T-cell (primary cell): ENCODE measurements at regions of chr6 and their contacts with region 1.

Region 1: DNA sequence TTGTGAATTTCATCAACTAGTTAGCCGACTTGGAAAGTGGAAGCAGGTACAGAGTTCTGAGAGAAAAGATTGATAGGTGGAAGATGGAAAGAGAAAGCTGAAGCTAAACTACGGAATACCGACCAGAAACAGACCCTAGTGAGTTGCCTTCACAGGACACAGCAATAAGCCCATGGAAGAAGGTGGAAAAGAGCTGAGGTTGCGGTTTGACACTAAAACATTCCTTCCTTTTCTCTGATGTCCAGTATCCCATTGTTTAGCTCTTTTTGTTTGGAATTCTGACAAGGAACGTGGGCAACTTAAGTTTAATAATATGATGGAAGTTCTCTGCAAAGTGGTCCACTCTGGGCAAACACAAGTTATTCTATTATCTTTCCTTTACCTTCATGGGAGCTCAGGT is 110.1 kb upstream of the ADTRP start:
- DNase-seq: no peak
- ATAC-seq: no peak
- H3K4me3 ChIP-seq: no peak overlapping the region
- H3K4me3 Mint-ChIP-seq: no peak overlapping the region
- H3K27ac ChIP-seq: no peak overlapping the region
- H3K27ac Mint-ChIP-seq: no peak overlapping the region
- H3K4me1 ChIP-seq: no peaks in the 10 kb centered on the region
- H3K4me1 Mint-ChIP-seq: no peaks in the 10 kb centered on the region
- H3K27me3 ChIP-seq: no peaks in the 10 kb centered on the region
- H3K27me3 Mint-ChIP-seq: no peaks in the 10 kb centered on the region

Region 2: DNA sequence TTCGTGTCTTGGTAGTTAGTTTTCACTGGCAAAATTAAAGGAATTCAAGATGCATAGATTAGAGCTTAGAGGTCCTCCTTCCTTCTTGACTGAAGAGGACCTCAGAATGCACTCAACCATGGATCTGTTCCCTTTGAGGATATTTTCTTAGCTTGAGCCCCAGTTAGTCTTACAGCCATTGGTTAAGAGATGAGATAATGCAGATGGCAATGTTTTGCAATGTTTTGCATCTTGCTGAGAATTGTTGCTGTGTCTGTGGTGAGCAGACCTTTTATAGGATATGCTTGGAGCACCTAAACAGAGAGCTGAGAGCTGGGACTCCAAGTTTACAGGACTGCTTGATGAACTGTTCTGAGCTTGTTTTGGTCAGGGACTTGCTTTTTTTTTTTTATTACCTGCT is 243.7 kb before region 1 on chr6:
- CTCF ChIA-PET with region 1: no interaction called
- POLR2A ChIA-PET with region 1: no interaction called
- DNase-seq: no peak
- ATAC-seq: no peak
- H3K4me3 ChIP-seq: no peak overlapping the region
- H3K4me3 Mint-ChIP-seq: no peak overlapping the region
- H3K27ac ChIP-seq: no peak overlapping the region
- H3K27ac Mint-ChIP-seq: no peak overlapping the region
- H3K4me1 ChIP-seq: no peaks in the 10 kb centered on the region
- H3K4me1 Mint-ChIP-seq: no peaks in the 10 kb centered on the region
- H3K27me3 ChIP-seq: peaks cover 0 to 6% of the 10 kb centered on the region in 2 experiments
- H3K27me3 Mint-ChIP-seq: peaks cover 5 to 16% of the 10 kb centered on the region in 2 donors

Region 3: DNA sequence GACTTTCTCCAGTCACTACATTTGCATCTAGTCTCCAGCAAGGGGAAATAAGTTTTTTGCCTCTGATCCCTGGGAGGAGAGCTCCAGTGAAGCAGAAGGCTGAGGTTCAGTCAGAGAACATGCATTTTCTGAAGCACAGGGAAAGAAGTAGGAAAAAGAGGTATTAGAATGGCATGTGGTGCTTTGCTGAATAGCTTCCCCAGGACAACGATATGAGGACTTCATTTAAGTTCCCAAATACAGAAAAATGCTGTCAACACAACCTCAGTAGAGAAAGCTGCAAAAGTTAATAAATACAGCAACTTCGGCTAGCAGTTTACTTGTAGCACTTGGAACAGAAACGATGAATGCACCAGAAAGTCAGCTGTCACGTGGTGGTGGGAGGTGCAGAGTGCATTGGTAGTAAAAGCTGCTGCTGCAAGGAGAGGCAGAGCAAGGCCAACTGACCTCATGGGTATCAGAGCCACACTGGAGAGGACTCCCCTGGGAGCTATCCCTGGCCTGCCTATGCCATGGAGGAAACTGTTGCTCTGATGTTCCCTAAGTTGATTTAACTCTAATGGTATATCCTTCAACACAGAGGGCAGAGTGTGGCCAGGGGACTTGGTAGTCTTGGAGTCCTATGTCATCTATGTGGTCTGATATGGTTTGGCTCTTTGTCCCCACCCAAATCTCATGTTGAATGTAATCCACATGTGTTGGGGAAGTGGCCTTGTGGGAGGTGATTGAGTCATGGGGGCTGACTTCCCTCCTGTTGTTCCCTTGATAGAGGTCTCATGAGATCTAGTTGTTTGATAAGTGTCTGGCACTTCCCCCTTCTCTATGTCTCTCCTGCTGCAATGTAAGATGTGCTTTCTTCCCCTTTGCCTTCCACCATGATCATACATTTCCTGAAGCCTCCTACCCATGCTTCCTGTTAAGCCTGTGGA is 196.0 kb before region 1 on chr6:
- CTCF ChIA-PET with region 1: no interaction called
- POLR2A ChIA-PET with region 1: interaction called in 1 of 2 experiments, 12 read pairs
- DNase-seq: no peak
- ATAC-seq: no peak
- H3K4me3 ChIP-seq: no peak overlapping the region
- H3K4me3 Mint-ChIP-seq: no peak overlapping the region
- H3K27ac ChIP-seq: no peak overlapping the region
- H3K27ac Mint-ChIP-seq: no peak overlapping the region
- H3K4me1 ChIP-seq: no peaks in the 10 kb centered on the region
- H3K4me1 Mint-ChIP-seq: peaks cover 0 to 6% (median 3%) of the 10 kb centered on the region in 3 donors
- H3K27me3 ChIP-seq: no peaks in the 10 kb centered on the region
- H3K27me3 Mint-ChIP-seq: no peaks in the 10 kb centered on the region

Region 4: DNA sequence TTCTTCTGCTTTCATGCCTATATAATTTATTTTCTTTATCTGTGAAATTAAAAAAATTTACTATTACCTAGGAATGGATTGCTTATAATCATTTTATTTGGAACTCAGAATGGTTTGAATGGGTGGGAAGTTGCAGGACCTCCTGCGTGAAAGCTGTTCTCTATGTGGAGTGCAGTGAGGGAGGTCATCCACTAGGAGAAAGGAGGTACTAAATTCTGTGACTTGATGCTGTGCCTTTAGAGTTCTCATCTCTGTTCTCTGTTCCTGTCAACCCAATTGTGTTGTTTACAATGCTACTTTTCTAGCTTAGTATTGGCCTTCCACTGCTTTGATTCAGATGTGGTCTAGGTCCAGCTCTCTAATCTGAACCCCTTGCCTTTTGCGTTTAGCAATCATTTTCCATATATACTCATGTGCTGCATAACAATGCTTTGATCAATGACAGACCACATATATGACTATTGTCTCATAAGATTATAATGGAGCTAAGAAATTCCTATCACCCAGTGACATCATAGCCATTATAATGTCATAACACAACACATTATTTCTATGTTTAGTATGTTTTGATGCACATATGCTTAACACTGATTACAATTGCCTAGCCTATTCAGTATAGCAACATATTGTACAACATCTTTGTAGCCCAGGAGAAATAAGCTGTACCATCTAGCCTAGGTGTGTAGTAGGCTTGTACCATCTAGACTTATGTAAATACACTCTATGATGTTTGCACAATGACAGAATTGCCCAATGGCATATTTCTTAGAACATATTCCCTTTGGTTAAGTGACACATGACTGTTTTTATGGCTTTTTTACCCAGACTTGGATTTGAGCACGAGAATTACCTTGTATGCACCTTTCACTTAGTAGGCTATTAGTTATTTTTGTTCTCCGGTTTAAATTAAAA is 58.6 kb after region 1 on chr6:
- CTCF ChIA-PET with region 1: no interaction called
- POLR2A ChIA-PET with region 1: no interaction called
- DNase-seq: peak in 1 of 35 experiments; percentile 27
- ATAC-seq: peak in 1 of 4 experiments; percentile 35
- H3K4me3 ChIP-seq: no peak overlapping the region
- H3K4me3 Mint-ChIP-seq: no peak overlapping the region
- H3K27ac ChIP-seq: no peak overlapping the region
- H3K27ac Mint-ChIP-seq: no peak overlapping the region
- H3K4me1 ChIP-seq: no peaks in the 10 kb centered on the region
- H3K4me1 Mint-ChIP-seq: peaks cover 0 to 3% (median 0%) of the 10 kb centered on the region in 3 donors
- H3K27me3 ChIP-seq: no peaks in the 10 kb centered on the region
- H3K27me3 Mint-ChIP-seq: no peaks in the 10 kb centered on the region